ENCODE measurements at regions of chr5 and their contacts with region 1.

Region 1: GRCh38 chr5:151628112-151628823 is 37.1 kb upstream of the FAT2 start:
- DNase-seq: no peak
- H3K27ac ChIP-seq: peak overlapping the region; percentile 99
- CTCF ChIP-seq: no peak

Region 2: GRCh38 chr5:151492729-151493128 is 135.5 kb before region 1 on chr5:
- CTCF ChIA-PET with region 1: no interaction called
- POLR2A ChIA-PET with region 1: no interaction called
- DNase-seq: peak; percentile 52
- H3K27ac ChIP-seq: no peak overlapping the region
- CTCF ChIP-seq: no peak

Region 3: GRCh38 chr5:151581812-151582583 is 46.3 kb before region 1 on chr5:
- CTCF ChIA-PET with region 1: no interaction called
- POLR2A ChIA-PET with region 1: interaction called, 19 read pairs
- DNase-seq: peak; percentile 90
- H3K27ac ChIP-seq: peak overlapping the region; percentile 98
- CTCF ChIP-seq: no peak

Measured in RWPE1 (cell line).